CD8-positive, alpha-beta T cell (primary cell): ENCODE measurements at regions of chr13 and their contacts with region 1.

Region 1: GRCh38 chr13:76991796-76992547 is at the start of gene CLN5:
- DNase-seq: peak; percentile 91 to 98 (median 94)
- ATAC-seq: peak; percentile 83
- H3K4me3 ChIP-seq: peak within 1 kb of the TSS; percentile 72 to 86
- H3K4me3 Mint-ChIP-seq: peak within 1 kb of the TSS; percentile 95
- H3K27ac ChIP-seq: peak within 1 kb of the TSS; percentile 84 to 97
- H3K27ac Mint-ChIP-seq: peak within 1 kb of the TSS; percentile 99
- H3K4me1 ChIP-seq: peaks cover 31% of the 10 kb centered on the region
- H3K4me1 Mint-ChIP-seq: peaks cover 53% of the 10 kb centered on the region
- H3K27me3 ChIP-seq: peaks cover 0 to 13% of the 10 kb centered on the region in 2 experiments
- H3K27me3 Mint-ChIP-seq: peaks cover 12% of the 10 kb centered on the region
- CTCF ChIP-seq: no peak
- total RNA-seq, gene CLN5: 23.3 to 23.4 TPM

Region 2: GRCh38 chr13:77002590-77003190 is 10.7 kb after region 1 on chr13:
- CTCF ChIA-PET with region 1: interaction called, 11 read pairs
- POLR2A ChIA-PET with region 1: interaction called, 20 read pairs
- intact Hi-C with region 1: loop called in 1 of 2 experiments (anchors 1 kb)
- DNase-seq: peak in 2 of 9 experiments; percentile 28 to 39
- ATAC-seq: no peak
- H3K4me3 ChIP-seq: no peak overlapping the region
- H3K4me3 Mint-ChIP-seq: no peak overlapping the region
- H3K27ac ChIP-seq: no peak overlapping the region
- H3K27ac Mint-ChIP-seq: peak overlapping the region; percentile 5
- H3K4me1 ChIP-seq: peaks cover 23% of the 10 kb centered on the region
- H3K4me1 Mint-ChIP-seq: peaks cover 53% of the 10 kb centered on the region
- H3K27me3 ChIP-seq: no peaks in the 10 kb centered on the region
- H3K27me3 Mint-ChIP-seq: no peaks in the 10 kb centered on the region
- CTCF ChIP-seq: peak; percentile 66

Region 3: GRCh38 chr13:77016888-77017623 is 25.1 kb after region 1 on chr13:
- CTCF ChIA-PET with region 1: interaction called, 3 read pairs
- POLR2A ChIA-PET with region 1: interaction called, 15 read pairs
- intact Hi-C with region 1: no loop called
- DNase-seq: no peak
- ATAC-seq: no peak
- H3K4me3 ChIP-seq: no peak overlapping the region
- H3K4me3 Mint-ChIP-seq: no peak overlapping the region
- H3K27ac ChIP-seq: no peak overlapping the region
- H3K27ac Mint-ChIP-seq: peak overlapping the region; percentile 84
- H3K4me1 ChIP-seq: peaks cover 28% of the 10 kb centered on the region
- H3K4me1 Mint-ChIP-seq: peaks cover 79% of the 10 kb centered on the region
- H3K27me3 ChIP-seq: no peaks in the 10 kb centered on the region
- H3K27me3 Mint-ChIP-seq: no peaks in the 10 kb centered on the region
- CTCF ChIP-seq: no peak

Region 4: GRCh38 chr13:77099415-77099814 is 107.4 kb after region 1 on chr13:
- CTCF ChIA-PET with region 1: no interaction called
- POLR2A ChIA-PET with region 1: no interaction called
- intact Hi-C with region 1: no loop called
- DNase-seq: no peak
- ATAC-seq: no peak
- H3K4me3 ChIP-seq: no peak overlapping the region
- H3K4me3 Mint-ChIP-seq: no peak overlapping the region
- H3K27ac ChIP-seq: no peak overlapping the region
- H3K27ac Mint-ChIP-seq: no peak overlapping the region
- H3K4me1 ChIP-seq: no peaks in the 10 kb centered on the region
- H3K4me1 Mint-ChIP-seq: no peaks in the 10 kb centered on the region
- H3K27me3 ChIP-seq: no peaks in the 10 kb centered on the region
- H3K27me3 Mint-ChIP-seq: no peaks in the 10 kb centered on the region
- CTCF ChIP-seq: no peak